ENCODE measurements at regions of chr13 and their contacts with region 1.

Region 1: GRCh38 chr13:76903544-76904162 is 17.4 kb upstream of the KCTD12 start:
- DNase-seq: peak in 8 of 9 donors; percentile 51 to 75 (median 66)
- ATAC-seq: peak; percentile 94
- H3K4me3 ChIP-seq: no peak overlapping the region
- H3K4me3 Mint-ChIP-seq: no peak overlapping the region
- H3K27ac ChIP-seq: no peak overlapping the region
- H3K27ac Mint-ChIP-seq: no peak overlapping the region
- H3K4me1 ChIP-seq: no peaks in the 10 kb centered on the region
- H3K4me1 Mint-ChIP-seq: no peaks in the 10 kb centered on the region
- H3K27me3 ChIP-seq: peaks cover 0 to 3% of the 10 kb centered on the region in 2 donors
- H3K27me3 Mint-ChIP-seq: peaks cover 4 to 32% (median 30%) of the 10 kb centered on the region in 5 donors

Region 2: GRCh38 chr13:75870397-75870903 is 1033.2 kb before region 1 on chr13:
- CTCF ChIA-PET with region 1: interaction called, 21 read pairs
- POLR2A ChIA-PET with region 1: no interaction called
- intact Hi-C with region 1: loop called in 1 of 2 experiments (anchors 1 kb)
- DNase-seq: peak in 6 of 9 donors; percentile 12 to 61 (median 38)
- ATAC-seq: peak; percentile 75
- H3K4me3 ChIP-seq: peak overlapping the region; percentile 50
- H3K4me3 Mint-ChIP-seq: peak overlapping the region; percentile 60 to 85 (median 80)
- H3K27ac ChIP-seq: peak overlapping the region; percentile 52
- H3K27ac Mint-ChIP-seq: peak overlapping the region; percentile 72 to 92 (median 86)
- H3K4me1 ChIP-seq: peaks cover 0 to 13% of the 10 kb centered on the region in 2 donors
- H3K4me1 Mint-ChIP-seq: peaks cover 4 to 29% (median 19%) of the 10 kb centered on the region in 7 donors
- H3K27me3 ChIP-seq: no peaks in the 10 kb centered on the region
- H3K27me3 Mint-ChIP-seq: peaks cover 0 to 13% (median 3%) of the 10 kb centered on the region in 5 donors

Region 3: DNA sequence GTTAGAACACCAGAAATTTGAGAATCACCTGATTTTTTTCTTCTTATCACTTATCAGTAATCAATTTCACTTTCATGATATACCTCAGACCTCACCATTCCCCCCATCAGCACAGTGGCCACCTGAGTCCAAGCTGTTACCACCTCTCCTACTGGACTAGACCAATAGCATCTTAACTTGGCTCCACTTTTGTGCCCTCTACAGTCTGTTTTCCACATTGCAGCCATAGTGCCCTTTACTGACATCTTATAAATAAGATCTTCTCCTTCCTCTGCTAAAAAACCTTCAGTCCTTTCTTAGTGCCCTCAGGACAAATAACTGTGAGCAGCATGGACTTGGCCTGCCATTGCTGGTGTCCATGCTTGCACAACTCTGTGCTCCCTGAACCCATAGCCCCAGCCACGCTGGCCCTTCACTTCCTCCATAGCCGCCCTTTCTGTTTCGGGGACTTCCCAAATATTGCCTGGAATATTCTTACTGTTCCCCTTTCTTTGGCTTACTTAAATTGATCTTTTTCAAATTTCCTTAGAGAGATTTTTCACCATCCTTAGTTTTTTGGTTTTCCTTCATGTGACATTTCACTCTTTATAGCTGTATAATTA is 886.8 kb before region 1 on chr13:
- CTCF ChIA-PET with region 1: no interaction called
- POLR2A ChIA-PET with region 1: no interaction called
- intact Hi-C with region 1: loop called (anchors 5 kb)
- DNase-seq: peak in 5 of 9 donors; percentile 2 to 21 (median 4)
- ATAC-seq: no peak
- H3K4me3 ChIP-seq: no peak overlapping the region
- H3K4me3 Mint-ChIP-seq: no peak overlapping the region
- H3K27ac ChIP-seq: no peak overlapping the region
- H3K27ac Mint-ChIP-seq: no peak overlapping the region
- H3K4me1 ChIP-seq: no peaks in the 10 kb centered on the region
- H3K4me1 Mint-ChIP-seq: peaks cover 0 to 11% (median 0%) of the 10 kb centered on the region in 7 donors
- H3K27me3 ChIP-seq: no peaks in the 10 kb centered on the region
- H3K27me3 Mint-ChIP-seq: peaks cover 0 to 5% (median 0%) of the 10 kb centered on the region in 5 donors

Region 4: GRCh38 chr13:76473552-76474134 is 430.0 kb before region 1 on chr13:
- CTCF ChIA-PET with region 1: interaction called, 4 read pairs
- POLR2A ChIA-PET with region 1: no interaction called
- intact Hi-C with region 1: loop called (anchors 1 to 2 kb)
- DNase-seq: peak; percentile 25 to 70 (median 61)
- ATAC-seq: peak; percentile 97
- H3K4me3 ChIP-seq: no peak overlapping the region
- H3K4me3 Mint-ChIP-seq: no peak overlapping the region
- H3K27ac ChIP-seq: no peak overlapping the region
- H3K27ac Mint-ChIP-seq: peak overlapping the region in 1 of 9 donors; percentile 21
- H3K4me1 ChIP-seq: no peaks in the 10 kb centered on the region
- H3K4me1 Mint-ChIP-seq: no peaks in the 10 kb centered on the region
- H3K27me3 ChIP-seq: no peaks in the 10 kb centered on the region
- H3K27me3 Mint-ChIP-seq: peaks cover 6 to 29% (median 7%) of the 10 kb centered on the region in 5 donors

Region 5: DNA sequence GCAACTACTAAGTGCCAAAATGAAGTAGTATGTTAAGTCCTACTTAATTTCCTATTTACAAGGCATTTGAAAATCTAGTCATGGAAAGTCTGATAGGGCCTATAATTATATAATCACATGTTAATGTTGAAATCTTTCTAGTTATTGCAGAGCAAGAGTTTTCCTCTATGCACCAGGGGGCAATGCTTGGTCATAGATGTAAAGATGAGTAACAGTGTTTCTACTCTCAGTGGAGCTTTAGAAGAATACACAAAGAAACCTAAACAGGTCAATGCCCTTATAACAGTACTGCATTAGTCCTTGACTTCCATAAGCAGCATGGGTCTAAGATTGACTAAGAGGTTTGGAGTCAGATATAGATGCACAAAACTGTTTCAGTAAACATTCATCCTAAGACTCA is 236.1 kb before region 1 on chr13:
- CTCF ChIA-PET with region 1: interaction called, 50 read pairs
- POLR2A ChIA-PET with region 1: no interaction called
- intact Hi-C with region 1: loop called (anchors 1 to 2 kb)
- DNase-seq: peak in 6 of 9 donors; percentile 11 to 38 (median 20)
- ATAC-seq: peak; percentile 63
- H3K4me3 ChIP-seq: no peak overlapping the region
- H3K4me3 Mint-ChIP-seq: no peak overlapping the region
- H3K27ac ChIP-seq: no peak overlapping the region
- H3K27ac Mint-ChIP-seq: no peak overlapping the region
- H3K4me1 ChIP-seq: no peaks in the 10 kb centered on the region
- H3K4me1 Mint-ChIP-seq: no peaks in the 10 kb centered on the region
- H3K27me3 ChIP-seq: no peaks in the 10 kb centered on the region
- H3K27me3 Mint-ChIP-seq: peaks cover 0 to 10% (median 0%) of the 10 kb centered on the region in 5 donors

Region 6: GRCh38 chr13:76822698-76823267 is 80.9 kb before region 1 on chr13:
- CTCF ChIA-PET with region 1: interaction called, 22 read pairs
- POLR2A ChIA-PET with region 1: no interaction called
- intact Hi-C with region 1: loop called (anchors 1 kb)
- DNase-seq: peak in 6 of 9 donors; percentile 5 to 36 (median 22)
- ATAC-seq: peak; percentile 52
- H3K4me3 ChIP-seq: no peak overlapping the region
- H3K4me3 Mint-ChIP-seq: no peak overlapping the region
- H3K27ac ChIP-seq: no peak overlapping the region
- H3K27ac Mint-ChIP-seq: no peak overlapping the region
- H3K4me1 ChIP-seq: no peaks in the 10 kb centered on the region
- H3K4me1 Mint-ChIP-seq: peaks cover 0 to 3% (median 0%) of the 10 kb centered on the region in 7 donors
- H3K27me3 ChIP-seq: no peaks in the 10 kb centered on the region
- H3K27me3 Mint-ChIP-seq: peaks cover 0 to 7% (median 0%) of the 10 kb centered on the region in 5 donors

Region 7: DNA sequence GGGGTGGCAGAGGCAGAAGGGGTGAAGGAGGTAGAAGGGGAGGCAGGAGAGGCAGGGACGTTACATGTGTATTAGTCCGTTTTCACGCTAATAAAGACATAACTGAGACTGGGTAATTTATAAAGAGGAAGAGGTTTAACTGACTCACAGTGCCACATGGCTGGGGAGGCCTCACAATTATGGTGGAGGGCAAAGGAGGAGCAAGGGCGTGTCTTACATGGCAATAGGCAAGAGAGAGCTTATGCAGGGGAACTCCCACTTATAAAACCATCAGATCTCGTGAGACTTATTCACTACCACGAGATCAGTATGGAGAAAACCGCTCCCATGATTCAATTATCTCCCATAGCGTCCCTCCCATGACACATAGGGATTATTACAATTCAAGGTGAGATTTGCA is 25.7 kb after region 1 on chr13:
- CTCF ChIA-PET with region 1: no interaction called
- POLR2A ChIA-PET with region 1: no interaction called
- intact Hi-C with region 1: no loop called
- DNase-seq: no peak
- ATAC-seq: no peak
- H3K4me3 ChIP-seq: no peak overlapping the region
- H3K4me3 Mint-ChIP-seq: no peak overlapping the region
- H3K27ac ChIP-seq: no peak overlapping the region
- H3K27ac Mint-ChIP-seq: peak overlapping the region in 1 of 9 donors; percentile 2
- H3K4me1 ChIP-seq: no peaks in the 10 kb centered on the region
- H3K4me1 Mint-ChIP-seq: peaks cover 0 to 4% (median 0%) of the 10 kb centered on the region in 7 donors
- H3K27me3 ChIP-seq: no peaks in the 10 kb centered on the region
- H3K27me3 Mint-ChIP-seq: peaks cover 0 to 15% (median 6%) of the 10 kb centered on the region in 5 donors